Aorta (tissue), 5 donors: ENCODE measurements at regions of chr10 and their contacts with region 1.

Region 1: DNA sequence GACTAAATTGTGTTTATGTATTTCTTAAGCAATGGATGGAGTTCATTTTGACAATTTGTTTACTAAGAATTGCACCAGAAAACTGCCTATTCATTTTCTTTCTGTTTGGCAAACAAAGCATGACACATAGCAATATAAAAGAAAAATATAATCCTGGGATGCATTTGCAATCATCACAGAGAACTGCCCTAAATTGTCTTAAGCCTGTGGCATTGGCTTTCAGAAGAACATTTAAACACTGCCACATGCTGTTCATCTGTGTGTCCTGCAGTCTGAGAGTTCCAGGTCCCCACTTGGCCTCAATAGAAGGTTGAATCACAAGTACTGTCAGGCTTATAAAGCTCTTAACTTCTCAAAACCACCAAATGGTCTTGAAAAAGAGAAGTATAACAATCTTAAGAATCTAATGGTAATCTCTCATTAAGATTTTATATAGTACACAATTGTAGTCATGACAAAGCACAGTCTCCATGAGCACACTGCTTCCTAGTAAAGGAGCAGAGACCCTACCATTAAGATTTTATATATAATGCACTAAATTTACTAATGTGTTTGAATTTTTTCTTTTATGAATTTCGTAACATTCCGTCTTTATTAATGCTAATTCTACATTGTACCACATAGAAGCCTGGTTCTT is 29.9 kb downstream of the RNLS start:
- DNase-seq: no peak
- ATAC-seq: peak; percentile 87
- H3K4me3 ChIP-seq: no peak overlapping the region
- H3K27ac ChIP-seq: no peak overlapping the region
- H3K4me1 ChIP-seq: peaks cover 0 to 2% of the 10 kb centered on the region in 2 donors
- H3K27me3 ChIP-seq: no peaks in the 10 kb centered on the region

Region 2: DNA sequence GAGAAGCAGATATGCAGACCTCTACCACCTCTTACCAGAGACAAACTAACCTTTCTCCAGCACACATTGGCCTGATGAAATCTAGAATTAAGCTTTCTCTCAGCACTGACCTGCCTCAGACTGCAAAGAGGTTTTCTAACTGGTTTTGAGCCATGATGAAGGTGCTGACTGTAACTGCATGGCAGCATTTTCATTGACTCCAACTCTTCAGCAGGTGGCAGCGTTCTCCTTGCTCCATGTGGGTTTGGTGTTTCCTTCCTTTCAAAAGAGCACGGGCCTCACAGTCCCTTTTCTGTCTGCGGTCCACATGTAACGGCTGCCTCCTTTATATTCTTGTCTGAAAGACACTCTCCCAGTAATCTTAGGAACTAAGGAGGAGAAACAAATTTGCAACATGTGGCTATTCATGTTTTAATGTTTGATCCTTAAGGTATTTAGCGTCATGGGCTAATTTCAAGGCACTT is 702.5 kb before region 1 on chr10:
- intact Hi-C with region 1: loop called (anchors 5 kb)
- DNase-seq: peak in 1 of 2 donors; percentile 55
- ATAC-seq: peak; percentile 84
- H3K4me3 ChIP-seq: no peak overlapping the region
- H3K27ac ChIP-seq: no peak overlapping the region
- H3K4me1 ChIP-seq: no peaks in the 10 kb centered on the region
- H3K27me3 ChIP-seq: no peaks in the 10 kb centered on the region

Region 3: GRCh38 chr10:88386821-88387773 is 166.1 kb before region 1 on chr10:
- intact Hi-C with region 1: no loop called
- DNase-seq: no peak
- ATAC-seq: peak; percentile 88
- H3K4me3 ChIP-seq: peak overlapping the region; percentile 31 to 90
- H3K27ac ChIP-seq: peak overlapping the region; percentile 68 to 82
- H3K4me1 ChIP-seq: no peaks in the 10 kb centered on the region
- H3K27me3 ChIP-seq: no peaks in the 10 kb centered on the region

Region 4: GRCh38 chr10:88401671-88402347 is 151.4 kb before region 1 on chr10:
- intact Hi-C with region 1: loop called (anchors 5 kb)
- DNase-seq: no peak
- ATAC-seq: no peak
- H3K4me3 ChIP-seq: no peak overlapping the region
- H3K27ac ChIP-seq: no peak overlapping the region
- H3K4me1 ChIP-seq: peaks cover 0 to 1% of the 10 kb centered on the region in 2 donors
- H3K27me3 ChIP-seq: no peaks in the 10 kb centered on the region

Region 5: GRCh38 chr10:88791924-88792323 is 238.7 kb after region 1 on chr10:
- intact Hi-C with region 1: no loop called
- DNase-seq: no peak
- ATAC-seq: no peak
- H3K4me3 ChIP-seq: no peak overlapping the region
- H3K27ac ChIP-seq: no peak overlapping the region
- H3K4me1 ChIP-seq: no peaks in the 10 kb centered on the region
- H3K27me3 ChIP-seq: no peaks in the 10 kb centered on the region